IMR-90 (cell line): ENCODE measurements at regions of chr2 and their contacts with region 1.

Region 1: GRCh38 chr2:33583194-33583938 is 15.7 kb downstream of the FAM98A start:
- DNase-seq: peak; percentile 52
- ATAC-seq: peak; percentile 77
- H3K4me3 ChIP-seq: no peak overlapping the region
- H3K27ac ChIP-seq: no peak overlapping the region
- H3K4me1 ChIP-seq: peaks cover 2% of the 10 kb centered on the region; the same call in 1 of the 2 replicates
- H3K27me3 ChIP-seq: no peaks in the 10 kb centered on the region
- CTCF ChIP-seq: peak; percentile 83
- POLR2A ChIP-seq: no peak
- RAD21 ChIP-seq: peak; percentile 87

Region 2: GRCh38 chr2:32772638-32773447 is 810.5 kb before region 1 on chr2:
- CTCF ChIA-PET with region 1: interaction called, 3 read pairs
- POLR2A ChIA-PET with region 1: no interaction called
- dilution Hi-C with region 1: no loop called
- in situ Hi-C with region 1: no loop called
- intact Hi-C with region 1: loop called (anchors 2 kb)
- DNase-seq: peak; percentile 76
- ATAC-seq: peak; percentile 95
- H3K4me3 ChIP-seq: no peak overlapping the region
- H3K27ac ChIP-seq: no peak overlapping the region
- H3K4me1 ChIP-seq: peaks cover 7% of the 10 kb centered on the region; the same call in 1 of the 2 replicates
- H3K27me3 ChIP-seq: no peaks in the 10 kb centered on the region
- CTCF ChIP-seq: peak; percentile 85
- POLR2A ChIP-seq: no peak
- RAD21 ChIP-seq: peak; percentile 95

Region 3: DNA sequence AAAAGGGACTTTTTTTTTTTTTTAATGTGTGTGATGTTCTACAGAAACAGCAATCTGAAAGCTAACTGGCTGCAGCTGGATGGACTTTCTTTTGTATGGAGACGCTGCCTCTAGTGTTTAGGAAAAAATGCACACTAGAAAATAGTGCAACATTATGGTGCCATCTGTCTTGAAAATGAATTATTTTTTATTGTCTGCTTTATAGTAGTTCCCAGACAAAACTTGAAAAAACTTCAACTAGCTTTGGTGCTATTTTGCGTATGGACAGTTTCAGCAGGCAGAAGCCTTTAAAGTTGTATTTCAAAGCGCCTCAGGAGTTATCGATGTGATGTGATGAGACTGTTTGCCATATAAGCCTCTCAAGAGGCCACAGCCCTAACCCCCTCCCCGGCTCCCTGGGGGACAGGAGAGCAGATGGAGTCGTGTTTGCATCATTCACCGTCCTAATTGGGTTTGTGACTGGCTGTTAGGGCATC is 549.7 kb before region 1 on chr2:
- CTCF ChIA-PET with region 1: no interaction called
- POLR2A ChIA-PET with region 1: no interaction called
- dilution Hi-C with region 1: no loop called
- in situ Hi-C with region 1: no loop called
- intact Hi-C with region 1: loop called (anchors 10 kb)
- DNase-seq: peak; percentile 66
- ATAC-seq: peak; percentile 80
- H3K4me3 ChIP-seq: no peak overlapping the region
- H3K27ac ChIP-seq: peak overlapping the region; percentile 42; the same call in 1 of the 2 replicates
- H3K4me1 ChIP-seq: peaks cover 4% of the 10 kb centered on the region
- H3K27me3 ChIP-seq: no peaks in the 10 kb centered on the region
- CTCF ChIP-seq: peak; percentile 75
- POLR2A ChIP-seq: no peak
- RAD21 ChIP-seq: peak; percentile 68

Region 4: DNA sequence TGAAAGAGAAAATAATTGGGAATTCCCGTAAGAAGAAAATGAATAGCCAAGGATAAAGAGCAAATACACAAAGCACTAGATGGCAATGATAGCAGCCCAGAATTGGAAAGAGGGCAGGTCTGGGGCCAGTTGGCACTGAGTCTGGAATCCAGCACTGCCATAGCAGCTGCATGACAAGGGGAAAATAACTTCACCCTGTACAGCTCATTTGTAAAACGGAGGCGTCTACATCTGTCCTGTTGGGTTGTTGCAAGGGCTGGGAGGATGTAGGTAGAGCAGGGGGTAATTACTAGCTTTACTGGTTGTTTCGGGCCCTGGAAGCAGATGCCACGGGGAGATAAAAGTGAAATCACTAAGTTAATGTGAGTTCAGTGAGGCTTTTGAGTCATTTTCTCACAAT is 216.9 kb before region 1 on chr2:
- CTCF ChIA-PET with region 1: no interaction called
- POLR2A ChIA-PET with region 1: no interaction called
- dilution Hi-C with region 1: no loop called
- in situ Hi-C with region 1: no loop called
- intact Hi-C with region 1: no loop called
- DNase-seq: no peak
- ATAC-seq: no peak
- H3K4me3 ChIP-seq: no peak overlapping the region
- H3K27ac ChIP-seq: no peak overlapping the region
- H3K4me1 ChIP-seq: peaks cover 3% of the 10 kb centered on the region
- H3K27me3 ChIP-seq: no peaks in the 10 kb centered on the region
- CTCF ChIP-seq: no peak
- POLR2A ChIP-seq: no peak
- RAD21 ChIP-seq: no peak

Region 5: GRCh38 chr2:33412920-33413319 is 170.4 kb before region 1 on chr2:
- CTCF ChIA-PET with region 1: interaction called, 8 read pairs
- POLR2A ChIA-PET with region 1: no interaction called
- dilution Hi-C with region 1: no loop called
- in situ Hi-C with region 1: no loop called
- intact Hi-C with region 1: loop called (anchors 1 kb)
- DNase-seq: peak; percentile 76
- ATAC-seq: peak; percentile 44; the same call in 1 of the 2 replicates
- H3K4me3 ChIP-seq: no peak overlapping the region
- H3K27ac ChIP-seq: peak overlapping the region; percentile 78; the same call in 1 of the 2 replicates
- H3K4me1 ChIP-seq: peaks cover 5% of the 10 kb centered on the region
- H3K27me3 ChIP-seq: no peaks in the 10 kb centered on the region
- CTCF ChIP-seq: peak; percentile 58
- POLR2A ChIP-seq: no peak
- RAD21 ChIP-seq: peak; percentile 61

Region 6: DNA sequence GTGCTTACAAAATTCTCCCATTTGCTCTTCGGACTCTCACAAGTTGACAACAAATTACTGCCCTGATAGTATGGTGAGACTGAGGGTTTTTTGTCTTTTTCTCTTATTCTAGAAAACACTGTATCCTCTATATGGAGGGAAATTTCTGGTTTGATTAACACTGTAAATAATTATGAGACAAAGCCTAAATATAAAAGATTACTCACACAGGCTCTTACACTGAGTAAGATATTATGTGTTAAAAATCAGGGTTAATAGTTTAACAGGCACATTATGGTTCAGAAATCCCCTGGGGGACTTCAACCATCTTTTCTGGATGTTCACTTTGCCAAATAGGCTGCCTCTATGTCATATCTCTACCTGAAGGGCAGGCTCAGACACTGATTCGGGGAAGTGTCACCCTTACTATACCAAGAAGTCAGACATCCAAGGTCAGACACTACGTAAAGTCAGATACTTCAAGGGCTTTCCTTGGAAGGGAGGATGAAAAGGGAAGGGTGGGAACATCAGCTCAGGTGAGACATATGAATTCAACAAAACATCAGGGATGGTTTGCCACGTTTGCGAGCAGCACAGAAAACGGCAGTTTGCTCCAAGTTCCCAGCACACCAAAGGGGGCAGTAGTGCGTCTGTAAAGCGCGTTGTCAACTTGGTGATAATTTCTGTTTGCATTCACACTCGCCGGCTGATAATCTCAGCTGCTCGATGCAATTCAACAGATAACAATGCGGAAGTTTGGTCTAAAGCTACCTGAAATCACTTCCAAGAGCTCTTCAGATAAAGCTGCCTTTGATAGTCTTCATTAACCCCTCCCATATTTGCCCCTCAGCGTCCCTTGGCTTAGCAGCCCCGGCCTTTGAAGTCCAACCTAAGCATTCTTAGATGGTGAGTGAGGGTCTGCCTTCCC is 107.9 kb before region 1 on chr2:
- CTCF ChIA-PET with region 1: interaction called, 5 read pairs
- POLR2A ChIA-PET with region 1: no interaction called
- dilution Hi-C with region 1: no loop called
- in situ Hi-C with region 1: loop called (anchors 5 kb)
- intact Hi-C with region 1: loop called (anchors 1 kb)
- DNase-seq: peak; percentile 83
- ATAC-seq: peak; percentile 79
- H3K4me3 ChIP-seq: peak overlapping the region; percentile 52
- H3K27ac ChIP-seq: peak overlapping the region; percentile 42
- H3K4me1 ChIP-seq: peaks cover 2% of the 10 kb centered on the region
- H3K27me3 ChIP-seq: no peaks in the 10 kb centered on the region
- CTCF ChIP-seq: peak; percentile 78
- POLR2A ChIP-seq: no peak
- RAD21 ChIP-seq: peak; percentile 63